ENCODE measurements at regions of chr17 and their contacts with region 1.

Region 1: GRCh38 chr17:45228763-45229539 is 7.3 kb downstream of the FMNL1 start:
- DNase-seq: peak; percentile 78 to 91 (median 85)
- H3K4me3 ChIP-seq: peak overlapping the region; percentile 95
- H3K4me3 Mint-ChIP-seq: peak overlapping the region; percentile 96 to 100 (median 99)
- H3K27ac ChIP-seq: peak overlapping the region; percentile 98
- H3K27ac Mint-ChIP-seq: peak overlapping the region; percentile 97 to 100 (median 100)
- H3K4me1 ChIP-seq: peaks cover 75% of the 10 kb centered on the region
- H3K4me1 Mint-ChIP-seq: peaks cover 80 to 90% (median 83%) of the 10 kb centered on the region in 3 donors
- H3K27me3 ChIP-seq: no peaks in the 10 kb centered on the region
- H3K27me3 Mint-ChIP-seq: peaks cover 0 to 3% of the 10 kb centered on the region in 2 donors

Region 2: DNA sequence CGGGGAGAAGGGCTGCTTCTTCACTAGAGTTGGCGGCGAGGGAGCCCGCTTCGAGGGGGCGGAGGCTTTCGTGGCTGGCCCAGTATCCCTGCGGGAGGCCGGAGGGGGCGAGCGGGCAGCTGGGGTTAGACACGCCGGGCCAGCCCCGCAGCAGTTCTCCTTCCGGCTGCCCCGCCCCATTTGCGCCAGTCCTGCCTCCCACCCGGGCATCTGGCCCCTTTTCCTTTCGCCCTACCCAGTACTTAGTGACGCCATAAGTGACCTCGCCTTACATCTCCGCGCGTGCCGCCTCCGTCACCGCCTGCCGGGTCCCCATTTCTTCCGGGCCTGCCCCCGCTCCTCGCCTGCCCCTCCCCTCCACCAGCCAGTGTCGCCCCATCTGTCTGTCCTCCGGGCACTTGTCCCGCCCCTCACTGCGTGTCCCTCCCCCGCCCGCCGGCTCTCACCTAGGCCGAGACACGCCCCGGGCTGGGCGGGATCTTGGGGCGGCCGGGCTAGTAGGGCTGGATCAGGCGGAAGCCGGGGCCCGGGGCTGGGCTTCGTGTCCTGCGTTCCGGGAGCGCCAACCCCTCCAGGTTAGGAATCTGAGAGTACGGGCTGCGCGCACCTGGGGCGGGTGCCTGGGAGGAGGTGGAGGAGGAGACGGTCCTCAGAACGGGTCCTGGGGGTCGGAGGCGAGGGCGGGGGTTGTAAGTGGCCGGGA is 18.6 kb after region 1 on chr17:
- CTCF ChIA-PET with region 1: interaction called, 74 read pairs
- POLR2A ChIA-PET with region 1: interaction called, 189 read pairs
- DNase-seq: peak; percentile 92 to 99 (median 98)
- H3K4me3 ChIP-seq: peak overlapping the region; percentile 69
- H3K4me3 Mint-ChIP-seq: peak overlapping the region; percentile 85 to 94 (median 88)
- H3K27ac ChIP-seq: peak overlapping the region; percentile 90
- H3K27ac Mint-ChIP-seq: peak overlapping the region; percentile 93 to 100 (median 97)
- H3K4me1 ChIP-seq: peaks cover 56% of the 10 kb centered on the region
- H3K4me1 Mint-ChIP-seq: peaks cover 31 to 71% (median 40%) of the 10 kb centered on the region in 3 donors
- H3K27me3 ChIP-seq: no peaks in the 10 kb centered on the region
- H3K27me3 Mint-ChIP-seq: no peaks in the 10 kb centered on the region

Measured in CD8-positive, alpha-beta memory T cell (primary cell).